Heart right ventricle (tissue), 16 donors: ENCODE measurements at regions of chr2 and their contacts with region 1.

Region 1: DNA sequence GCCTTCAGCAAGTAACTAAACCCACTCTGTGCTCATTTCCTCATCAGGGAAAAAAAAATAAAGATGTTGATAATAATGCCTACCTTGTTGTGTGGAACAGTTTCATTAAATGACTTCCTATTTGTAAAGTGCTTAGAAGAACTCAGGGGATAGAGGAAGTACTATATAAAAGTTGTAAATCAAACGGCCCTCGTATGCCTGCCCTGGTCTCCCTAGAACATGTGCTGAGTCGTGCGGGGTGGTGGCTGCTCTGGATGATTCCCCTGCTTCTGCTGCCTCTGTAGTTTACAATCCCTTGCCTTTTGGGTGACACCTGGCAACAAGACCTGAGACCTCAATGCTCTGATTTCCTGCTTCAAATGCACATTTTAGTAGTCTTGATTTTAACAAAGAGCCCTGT is 170.0 kb downstream of the CERS6 start:
- DNase-seq: no peak
- ATAC-seq: peak in 2 of 8 donors; percentile 37 to 56
- H3K4me3 ChIP-seq: no peak overlapping the region
- H3K27ac ChIP-seq: peak overlapping the region in 1 of 10 donors; percentile 10
- H3K4me1 ChIP-seq: peaks cover 0 to 22% (median 7%) of the 10 kb centered on the region in 9 donors
- H3K27me3 ChIP-seq: no peaks in the 10 kb centered on the region
- CTCF ChIP-seq: no peak

Region 2: DNA sequence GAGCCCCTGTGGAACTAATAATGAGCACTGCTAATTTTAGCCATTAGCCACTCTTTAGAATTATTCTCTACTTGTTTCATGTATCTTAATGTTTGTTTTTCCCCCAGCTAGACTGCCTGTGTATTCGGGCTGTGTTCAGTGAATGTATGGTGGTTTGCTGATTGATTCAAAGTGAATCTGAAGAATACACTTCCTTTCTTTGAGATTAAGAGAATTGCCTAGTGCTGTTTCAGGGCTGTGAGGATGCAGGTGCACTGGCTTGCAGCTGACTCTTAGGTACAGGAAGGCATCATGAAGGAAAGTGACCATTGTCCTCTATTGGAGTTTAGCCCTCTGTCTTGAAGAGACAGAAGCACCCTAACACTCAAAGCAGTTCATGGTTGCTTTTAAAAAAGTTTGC is 31.3 kb before region 1 on chr2:
- intact Hi-C with region 1: loop called in 1 of 10 experiments (anchors 5 kb)
- DNase-seq: no peak
- ATAC-seq: peak in 3 of 8 donors; percentile 7 to 10 (median 7)
- H3K4me3 ChIP-seq: no peak overlapping the region
- H3K27ac ChIP-seq: peak overlapping the region in 2 of 10 donors; percentile 20 to 35
- H3K4me1 ChIP-seq: peaks cover 0 to 53% (median 20%) of the 10 kb centered on the region in 9 donors
- H3K27me3 ChIP-seq: no peaks in the 10 kb centered on the region
- CTCF ChIP-seq: no peak